ENCODE measurements at regions of chr7 and their contacts with region 1.

Region 1: GRCh38 chr7:7982904-7983303 is 14.3 kb downstream of the GLCCI1 start:
- DNase-seq: no peak
- H3K4me3 ChIP-seq: no peak overlapping the region
- H3K4me3 Mint-ChIP-seq: no peak overlapping the region
- H3K27ac ChIP-seq: no peak overlapping the region
- H3K27ac Mint-ChIP-seq: peak overlapping the region in 1 of 7 donors; percentile 26
- H3K4me1 ChIP-seq: peaks cover 66% of the 10 kb centered on the region
- H3K4me1 Mint-ChIP-seq: peaks cover 39 to 83% (median 59%) of the 10 kb centered on the region in 4 donors
- H3K27me3 ChIP-seq: no peaks in the 10 kb centered on the region
- H3K27me3 Mint-ChIP-seq: no peaks in the 10 kb centered on the region

Region 2: DNA sequence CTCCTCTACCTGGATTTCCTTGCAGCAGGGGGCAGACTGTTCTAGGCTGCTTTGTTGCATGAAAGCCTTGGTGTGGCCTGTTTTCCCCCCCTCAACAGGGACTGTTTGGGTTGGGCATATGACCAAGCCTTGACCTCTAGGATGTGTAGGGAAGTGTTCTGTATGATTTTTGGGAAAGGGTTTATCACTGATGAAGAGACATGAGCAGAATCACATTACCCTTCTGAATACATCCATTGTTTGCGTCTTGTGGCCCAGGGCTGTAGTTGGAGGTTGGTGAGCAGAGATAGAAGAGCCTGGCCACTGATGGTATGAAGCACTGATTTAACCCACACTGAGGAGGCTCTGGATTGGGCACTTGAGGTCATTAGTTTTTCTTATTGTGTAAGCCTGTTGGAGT is 1302.8 kb before region 1 on chr7:
- CTCF ChIA-PET with region 1: no interaction called
- POLR2A ChIA-PET with region 1: no interaction called
- intact Hi-C with region 1: no loop called
- DNase-seq: no peak
- H3K4me3 ChIP-seq: no peak overlapping the region
- H3K4me3 Mint-ChIP-seq: peak overlapping the region in 1 of 8 donors; percentile 33
- H3K27ac ChIP-seq: no peak overlapping the region
- H3K27ac Mint-ChIP-seq: no peak overlapping the region
- H3K4me1 ChIP-seq: no peaks in the 10 kb centered on the region
- H3K4me1 Mint-ChIP-seq: no peaks in the 10 kb centered on the region
- H3K27me3 ChIP-seq: no peaks in the 10 kb centered on the region
- H3K27me3 Mint-ChIP-seq: no peaks in the 10 kb centered on the region

Region 3: DNA sequence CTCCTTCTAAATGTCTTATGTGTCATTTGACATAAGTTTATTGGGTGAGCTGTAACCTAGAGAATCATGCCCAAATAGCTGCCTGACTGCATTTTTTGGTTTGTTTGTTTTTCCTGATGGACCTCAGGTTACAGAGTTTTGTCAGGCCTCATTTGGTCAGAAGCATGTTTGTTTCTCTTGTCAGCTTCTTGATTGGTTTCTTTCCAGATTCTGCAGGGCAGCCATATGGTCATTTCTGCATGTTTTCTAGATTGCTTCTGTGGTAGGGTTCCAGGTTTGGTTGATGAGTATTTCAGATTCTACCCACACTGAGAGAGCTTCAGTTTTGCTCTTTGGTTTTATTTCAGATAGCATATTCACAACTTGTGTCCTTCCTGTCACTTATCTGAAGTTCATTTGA is 13.7 kb after region 1 on chr7:
- CTCF ChIA-PET with region 1: interaction called, 3 read pairs
- POLR2A ChIA-PET with region 1: interaction called, 6 read pairs
- intact Hi-C with region 1: loop called (anchors 2 kb)
- DNase-seq: no peak
- H3K4me3 ChIP-seq: no peak overlapping the region
- H3K4me3 Mint-ChIP-seq: peak overlapping the region in 5 of 8 donors; percentile 12 to 73 (median 24)
- H3K27ac ChIP-seq: no peak overlapping the region
- H3K27ac Mint-ChIP-seq: peak overlapping the region in 3 of 7 donors; percentile 0 to 82 (median 38)
- H3K4me1 ChIP-seq: peaks cover 17% of the 10 kb centered on the region
- H3K4me1 Mint-ChIP-seq: peaks cover 17 to 33% (median 24%) of the 10 kb centered on the region in 4 donors
- H3K27me3 ChIP-seq: no peaks in the 10 kb centered on the region
- H3K27me3 Mint-ChIP-seq: no peaks in the 10 kb centered on the region

Measured in CD4-positive, alpha-beta memory T cell (primary cell).